CD14-positive monocyte (primary cell): ENCODE measurements at regions of chr16 and their contacts with region 1.

Region 1: DNA sequence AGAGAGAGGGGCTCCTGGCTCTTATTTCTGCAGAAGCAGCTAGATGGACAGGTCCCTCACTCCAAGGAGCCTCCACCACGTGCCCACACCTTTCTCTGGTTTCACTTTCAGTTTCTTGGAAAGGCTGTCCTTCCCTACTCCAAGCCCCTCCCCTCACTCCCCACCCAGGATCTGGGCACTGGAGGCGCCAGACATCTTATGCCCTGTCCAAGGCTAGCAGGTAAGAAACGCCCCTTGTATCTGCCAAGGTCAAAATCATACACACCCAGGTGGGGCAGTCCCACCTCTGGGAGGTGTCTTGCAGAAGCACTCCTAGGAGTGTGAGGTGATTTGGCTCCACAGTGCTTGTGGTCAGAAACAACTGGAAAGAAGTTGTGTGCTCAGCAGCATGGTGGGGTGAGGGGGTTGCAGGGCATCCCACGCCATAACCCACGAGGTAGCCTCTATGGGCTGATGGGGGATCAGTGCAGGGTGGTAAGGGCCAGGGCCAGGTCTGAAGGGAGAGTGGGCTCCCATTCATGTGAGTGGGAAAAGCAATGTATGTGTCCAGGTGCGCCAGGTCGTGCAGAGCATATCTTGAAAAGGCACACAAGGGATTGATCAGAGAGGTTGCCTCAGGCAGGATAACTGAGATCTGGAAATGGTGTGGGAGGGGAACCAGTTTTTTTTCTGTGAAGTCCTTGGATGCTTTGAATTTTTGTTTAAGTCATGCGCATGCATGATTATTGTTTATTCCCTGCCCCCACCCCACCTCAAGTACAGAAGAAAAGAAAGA is 31.8 kb upstream of the PRM1 start:
- DNase-seq: no peak
- H3K4me3 ChIP-seq: no peak overlapping the region
- H3K4me3 Mint-ChIP-seq: peak overlapping the region in 1 of 2 donors; percentile 80
- H3K27ac ChIP-seq: no peak overlapping the region
- H3K27ac Mint-ChIP-seq: peak overlapping the region in 4 of 7 donors; percentile 46 to 79 (median 63)
- H3K4me1 ChIP-seq: peaks cover 49 to 52% of the 10 kb centered on the region in 2 donors
- H3K4me1 Mint-ChIP-seq: peaks cover 53% of the 10 kb centered on the region
- H3K27me3 ChIP-seq: peaks cover 0 to 9% of the 10 kb centered on the region in 2 donors
- H3K27me3 Mint-ChIP-seq: peaks cover 23 to 44% (median 27%) of the 10 kb centered on the region in 3 donors
- CTCF ChIP-seq: no peak

Region 2: GRCh38 chr16:10876799-10877341 is 436.0 kb before region 1 on chr16 and contains the start of gene CIITA:
- intact Hi-C with region 1: no loop called
- DNase-seq: peak; percentile 91 to 96 (median 95)
- H3K4me3 ChIP-seq: peak within 1 kb of the TSS; percentile 82 to 96 (median 94)
- H3K4me3 Mint-ChIP-seq: peak within 1 kb of the TSS; percentile 93 to 97
- H3K27ac ChIP-seq: peak within 1 kb of the TSS; percentile 62 to 85
- H3K27ac Mint-ChIP-seq: peak within 1 kb of the TSS; percentile 91 to 97 (median 95)
- H3K4me1 ChIP-seq: peaks cover 73 to 79% of the 10 kb centered on the region in 2 donors
- H3K4me1 Mint-ChIP-seq: peaks cover 80% of the 10 kb centered on the region
- H3K27me3 ChIP-seq: no peaks in the 10 kb centered on the region
- H3K27me3 Mint-ChIP-seq: peaks cover 0 to 2% (median 0%) of the 10 kb centered on the region in 3 donors
- CTCF ChIP-seq: no peak
- polyA plus RNA-seq, gene CIITA: 15.6 to 178 (median 22.1) TPM

Region 3: GRCh38 chr16:11273721-11274324 is 39.1 kb before region 1 on chr16:
- intact Hi-C with region 1: no loop called
- DNase-seq: no peak
- H3K4me3 ChIP-seq: no peak overlapping the region
- H3K4me3 Mint-ChIP-seq: no peak overlapping the region
- H3K27ac ChIP-seq: no peak overlapping the region
- H3K27ac Mint-ChIP-seq: no peak overlapping the region
- H3K4me1 ChIP-seq: no peaks in the 10 kb centered on the region
- H3K4me1 Mint-ChIP-seq: peaks cover 4% of the 10 kb centered on the region
- H3K27me3 ChIP-seq: peaks cover 0 to 4% of the 10 kb centered on the region in 2 donors
- H3K27me3 Mint-ChIP-seq: peaks cover 11 to 17% (median 12%) of the 10 kb centered on the region in 3 donors
- CTCF ChIP-seq: no peak

Region 4: DNA sequence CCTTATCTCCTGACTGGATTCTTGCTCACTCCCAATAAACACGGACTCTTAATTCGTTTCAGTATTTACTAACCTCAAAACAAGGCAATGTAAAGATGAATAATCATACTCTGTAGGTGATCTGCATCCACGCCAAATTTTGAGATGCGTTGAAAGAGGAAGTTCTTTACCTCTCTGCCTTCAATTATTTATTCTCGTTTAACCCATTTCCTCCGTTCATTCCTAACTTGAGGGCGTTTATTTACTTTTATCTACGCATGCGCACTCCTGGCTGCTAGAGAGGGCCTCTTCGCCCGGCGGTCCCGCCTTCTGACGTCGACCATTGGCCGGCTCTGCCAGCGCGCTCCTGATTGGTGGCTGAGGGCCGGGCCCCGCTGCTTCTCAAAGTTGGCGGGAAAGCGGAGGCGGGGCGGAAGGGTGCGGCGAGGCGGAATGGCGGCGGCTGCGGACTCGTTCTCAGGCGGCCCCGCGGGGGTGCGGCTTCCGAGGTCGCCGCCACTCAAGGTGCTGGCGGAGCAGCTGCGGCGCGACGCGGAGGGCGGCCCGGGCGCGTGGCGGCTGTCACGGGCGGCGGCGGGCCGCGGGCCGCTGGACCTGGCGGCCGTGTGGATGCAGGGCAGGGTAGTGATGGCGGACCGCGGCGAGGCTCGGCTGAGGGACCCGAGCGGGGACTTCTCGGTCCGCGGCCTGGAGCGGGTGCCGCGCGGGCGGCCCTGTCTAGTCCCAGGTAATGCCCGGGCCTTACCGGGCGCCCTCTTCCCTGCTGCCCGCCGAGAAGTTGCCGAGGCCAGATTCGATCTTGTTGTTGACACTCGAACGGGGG is 32.3 kb after region 1 on chr16 and contains the start of gene RMI2:
- intact Hi-C with region 1: loop called in 1 of 2 experiments (anchors 5 kb)
- DNase-seq: peak; percentile 92 to 95 (median 94)
- H3K4me3 ChIP-seq: peak within 1 kb of the TSS; percentile 33 to 67 (median 50)
- H3K4me3 Mint-ChIP-seq: peak within 1 kb of the TSS; percentile 76 to 82
- H3K27ac ChIP-seq: no peak within 1 kb of the TSS
- H3K27ac Mint-ChIP-seq: peak within 1 kb of the TSS in 2 of 7 donors; percentile 42 to 72
- H3K4me1 ChIP-seq: peaks cover 38 to 51% of the 10 kb centered on the region in 2 donors
- H3K4me1 Mint-ChIP-seq: peaks cover 41% of the 10 kb centered on the region
- H3K27me3 ChIP-seq: no peaks in the 10 kb centered on the region
- H3K27me3 Mint-ChIP-seq: peaks cover 1 to 2% (median 1%) of the 10 kb centered on the region in 3 donors
- CTCF ChIP-seq: no peak
- polyA plus RNA-seq, gene RMI2: 0.17 to 0.24 (median 0.23) TPM

Region 5: GRCh38 chr16:11356573-11357331 is 43.8 kb after region 1 on chr16:
- intact Hi-C with region 1: loop called (anchors 5 kb)
- DNase-seq: peak; percentile 47 to 71 (median 68)
- H3K4me3 ChIP-seq: no peak overlapping the region
- H3K4me3 Mint-ChIP-seq: peak overlapping the region in 1 of 2 donors; percentile 81
- H3K27ac ChIP-seq: no peak overlapping the region
- H3K27ac Mint-ChIP-seq: peak overlapping the region in 1 of 7 donors; percentile 66
- H3K4me1 ChIP-seq: peaks cover 23 to 28% of the 10 kb centered on the region in 2 donors
- H3K4me1 Mint-ChIP-seq: peaks cover 35% of the 10 kb centered on the region
- H3K27me3 ChIP-seq: peaks cover 39 to 51% of the 10 kb centered on the region in 2 donors
- H3K27me3 Mint-ChIP-seq: peaks cover 52 to 73% (median 59%) of the 10 kb centered on the region in 3 donors
- CTCF ChIP-seq: peak; percentile 84

Region 6: GRCh38 chr16:11361701-11362451 is 49.0 kb after region 1 on chr16:
- intact Hi-C with region 1: loop called (anchors 5 kb)
- DNase-seq: peak in 2 of 3 donors; percentile 51 to 86
- H3K4me3 ChIP-seq: peak overlapping the region in 1 of 3 experiments; percentile 59
- H3K4me3 Mint-ChIP-seq: peak overlapping the region; percentile 71 to 86
- H3K27ac ChIP-seq: no peak overlapping the region
- H3K27ac Mint-ChIP-seq: peak overlapping the region in 5 of 7 donors; percentile 9 to 86 (median 54)
- H3K4me1 ChIP-seq: peaks cover 15 to 23% of the 10 kb centered on the region in 2 donors
- H3K4me1 Mint-ChIP-seq: peaks cover 40% of the 10 kb centered on the region
- H3K27me3 ChIP-seq: peaks cover 71 to 98% of the 10 kb centered on the region in 2 donors
- H3K27me3 Mint-ChIP-seq: peaks cover 94 to 100% (median 99%) of the 10 kb centered on the region in 3 donors
- CTCF ChIP-seq: no peak